Heart right ventricle (tissue), 16 donors: ENCODE measurements at regions of chr19 and their contacts with region 1.

Region 1: GRCh38 chr19:40006273-40006691 is 9.4 kb downstream of the ZNF546 start:
- DNase-seq: peak in 1 of 2 donors; percentile 8
- ATAC-seq: peak in 6 of 8 donors; percentile 16 to 72 (median 50)
- H3K4me3 ChIP-seq: no peak overlapping the region
- H3K27ac ChIP-seq: peak overlapping the region in 7 of 10 donors; percentile 52 to 82 (median 68)
- H3K4me1 ChIP-seq: peaks cover 0 to 20% (median 7%) of the 10 kb centered on the region in 9 donors
- H3K27me3 ChIP-seq: no peaks in the 10 kb centered on the region
- CTCF ChIP-seq: no peak

Region 2: GRCh38 chr19:39963898-39964297 is 42.4 kb before region 1 on chr19:
- intact Hi-C with region 1: no loop called
- DNase-seq: no peak
- ATAC-seq: no peak
- H3K4me3 ChIP-seq: no peak overlapping the region
- H3K27ac ChIP-seq: no peak overlapping the region
- H3K4me1 ChIP-seq: peaks cover 0 to 2% (median 0%) of the 10 kb centered on the region in 9 donors
- H3K27me3 ChIP-seq: peaks cover 0 to 48% (median 0%) of the 10 kb centered on the region in 7 donors
- CTCF ChIP-seq: no peak

Region 3: GRCh38 chr19:40055832-40056504 is 49.7 kb after region 1 on chr19 and contains the start of gene ZNF780B:
- intact Hi-C with region 1: loop called in 3 of 10 experiments (anchors 10 kb)
- DNase-seq: peak; percentile 45 to 54
- ATAC-seq: peak; percentile 89 to 99 (median 96)
- H3K4me3 ChIP-seq: peak within 1 kb of the TSS; percentile 68 to 89 (median 78)
- H3K27ac ChIP-seq: peak within 1 kb of the TSS; percentile 59 to 84 (median 81)
- H3K4me1 ChIP-seq: peaks cover 0 to 31% (median 16%) of the 10 kb centered on the region in 9 donors
- H3K27me3 ChIP-seq: no peaks in the 10 kb centered on the region
- CTCF ChIP-seq: no peak
- total RNA-seq, gene ZNF780B: 20.6 to 29.7 (median 25.8) TPM